ENCODE measurements at regions of chr11 and their contacts with region 1.

Region 1: DNA sequence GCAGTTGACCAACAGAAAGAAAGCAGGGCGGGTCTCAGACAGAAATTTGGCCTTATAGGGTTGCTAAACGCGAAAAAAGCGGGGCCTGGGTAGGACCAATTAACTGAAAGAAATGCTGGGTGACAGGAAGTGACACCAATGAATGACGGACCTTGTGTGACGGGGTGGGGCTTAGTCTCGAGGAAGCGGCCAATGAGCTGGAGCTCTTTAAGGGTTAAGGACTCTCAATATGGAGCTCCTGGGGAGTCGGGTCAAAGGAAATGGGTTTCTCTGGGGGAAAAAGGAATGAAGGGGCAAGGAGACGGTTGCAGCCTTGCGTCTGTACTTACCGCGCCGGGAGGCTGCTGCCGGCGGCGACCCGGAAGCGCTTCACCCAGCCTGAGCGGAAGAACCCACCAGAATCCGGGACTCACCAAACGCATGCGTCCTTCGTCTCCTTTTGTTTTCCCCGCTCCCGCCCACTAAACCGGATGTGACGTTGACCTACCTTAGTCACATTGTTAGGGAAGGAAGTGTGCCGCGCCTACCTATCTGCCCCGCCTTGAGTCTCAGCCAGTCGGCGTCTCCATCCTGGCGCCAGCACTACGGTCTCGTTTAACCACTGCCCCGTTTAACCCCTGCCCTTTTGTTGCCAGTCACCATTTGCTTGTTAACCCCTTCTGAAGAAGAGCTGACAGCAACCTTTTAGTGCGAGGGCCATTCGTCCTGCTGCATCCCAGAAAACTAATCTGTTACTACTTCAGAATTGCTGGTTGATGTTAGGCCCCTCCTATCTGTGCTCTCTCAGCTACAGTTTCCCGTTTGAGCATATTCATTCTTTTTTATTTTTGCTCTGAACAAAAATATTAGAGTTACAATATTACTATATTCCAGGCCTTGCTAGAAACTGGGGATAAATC is at the start of gene ANAPC15:
- DNase-seq: peak; percentile 100
- ATAC-seq: peak; percentile 89
- H3K4me3 Mint-ChIP-seq: peak within 1 kb of the TSS; percentile 92
- H3K27ac Mint-ChIP-seq: peak within 1 kb of the TSS; percentile 98
- H3K4me1 Mint-ChIP-seq: peaks cover 16% of the 10 kb centered on the region
- H3K27me3 Mint-ChIP-seq: no peaks in the 10 kb centered on the region
- total RNA-seq, gene ANAPC15: 60.3 to 76.1 TPM

Region 2: DNA sequence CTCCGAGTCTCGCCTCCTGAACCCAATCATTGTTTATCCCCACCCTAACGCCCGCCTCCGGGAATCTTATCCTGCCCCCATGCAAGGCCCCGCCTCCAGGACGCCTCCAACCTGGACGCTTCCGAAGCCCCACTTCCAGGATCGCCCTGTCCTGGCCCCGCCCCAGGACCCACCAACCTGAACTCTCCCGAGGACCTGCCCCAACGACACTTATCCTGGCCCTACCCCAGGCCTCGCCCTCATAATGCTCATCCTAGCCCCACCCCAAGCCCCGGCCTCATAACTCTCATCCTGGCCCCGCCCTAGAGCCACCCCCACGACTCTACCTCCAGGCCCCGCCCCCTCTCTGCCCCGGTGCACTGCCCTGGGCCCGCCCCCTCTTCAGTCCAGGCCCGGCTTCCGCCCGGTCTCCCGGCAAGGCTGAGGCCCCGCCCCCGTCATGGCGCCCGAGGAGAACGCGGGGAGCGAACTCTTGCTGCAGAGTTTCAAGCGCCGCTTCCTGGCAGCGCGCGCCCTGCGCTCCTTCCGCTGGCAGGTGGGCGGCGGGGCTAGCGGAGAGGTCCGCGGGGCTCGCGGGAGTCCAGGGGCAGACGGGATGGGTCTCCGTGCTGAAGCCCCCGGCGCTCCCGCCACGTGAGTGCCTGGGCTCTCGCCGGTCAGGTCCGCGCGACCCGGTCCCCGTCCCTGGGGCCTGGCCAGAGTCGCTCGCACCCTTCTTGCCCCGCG is 325.3 kb before region 1 on chr11:
- CTCF ChIA-PET with region 1: no interaction called
- POLR2A ChIA-PET with region 1: no interaction called
- intact Hi-C with region 1: loop called in 1 of 2 experiments (anchors 1 kb)
- DNase-seq: peak; percentile 97
- ATAC-seq: peak; percentile 97
- H3K4me3 Mint-ChIP-seq: peak overlapping the region; percentile 84
- H3K27ac Mint-ChIP-seq: peak overlapping the region; percentile 95
- H3K4me1 Mint-ChIP-seq: peaks cover 24% of the 10 kb centered on the region
- H3K27me3 Mint-ChIP-seq: no peaks in the 10 kb centered on the region

Region 3: DNA sequence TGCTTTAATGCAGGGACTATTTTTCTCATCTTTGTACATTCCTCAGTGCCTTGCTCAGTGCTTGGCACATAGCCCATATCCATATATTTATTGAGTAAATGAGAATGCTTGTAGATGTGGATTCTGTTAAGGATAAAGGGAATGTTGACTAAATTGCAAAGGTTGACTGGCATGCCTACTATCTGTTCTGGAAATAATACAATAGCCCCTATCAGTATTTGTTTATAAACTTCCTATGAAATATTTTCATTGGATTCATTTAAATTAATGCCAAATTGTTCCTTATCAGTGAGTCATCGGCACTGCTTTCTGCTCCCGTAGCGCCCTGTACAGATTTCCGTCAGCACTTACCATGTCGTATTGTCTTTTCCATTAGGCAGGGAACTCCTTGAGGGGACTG is 175.7 kb before region 1 on chr11:
- CTCF ChIA-PET with region 1: no interaction called
- POLR2A ChIA-PET with region 1: no interaction called
- intact Hi-C with region 1: no loop called
- DNase-seq: no peak
- ATAC-seq: no peak
- H3K4me3 Mint-ChIP-seq: no peak overlapping the region
- H3K27ac Mint-ChIP-seq: no peak overlapping the region
- H3K4me1 Mint-ChIP-seq: peaks cover 25% of the 10 kb centered on the region
- H3K27me3 Mint-ChIP-seq: no peaks in the 10 kb centered on the region

Region 4: GRCh38 chr11:72024069-72024754 is 88.4 kb before region 1 on chr11:
- CTCF ChIA-PET with region 1: interaction called, 10 read pairs
- POLR2A ChIA-PET with region 1: interaction called, 4 read pairs
- intact Hi-C with region 1: no loop called
- DNase-seq: no peak
- ATAC-seq: no peak
- H3K4me3 Mint-ChIP-seq: no peak overlapping the region
- H3K27ac Mint-ChIP-seq: peak overlapping the region; percentile 60
- H3K4me1 Mint-ChIP-seq: peaks cover 31% of the 10 kb centered on the region
- H3K27me3 Mint-ChIP-seq: no peaks in the 10 kb centered on the region

Region 5: GRCh38 chr11:72040726-72041441 is 71.7 kb before region 1 on chr11:
- CTCF ChIA-PET with region 1: no interaction called
- POLR2A ChIA-PET with region 1: interaction called, 3 read pairs
- intact Hi-C with region 1: loop called in 1 of 2 experiments (anchors 1 kb)
- DNase-seq: peak; percentile 86
- ATAC-seq: peak; percentile 76
- H3K4me3 Mint-ChIP-seq: no peak overlapping the region
- H3K27ac Mint-ChIP-seq: no peak overlapping the region
- H3K4me1 Mint-ChIP-seq: peaks cover 35% of the 10 kb centered on the region
- H3K27me3 Mint-ChIP-seq: no peaks in the 10 kb centered on the region

Region 6: GRCh38 chr11:72642043-72642883 is 529.7 kb after region 1 on chr11:
- CTCF ChIA-PET with region 1: no interaction called
- POLR2A ChIA-PET with region 1: no interaction called
- intact Hi-C with region 1: no loop called
- DNase-seq: peak; percentile 28
- ATAC-seq: peak; percentile 28
- H3K4me3 Mint-ChIP-seq: peak overlapping the region; percentile 34
- H3K27ac Mint-ChIP-seq: no peak overlapping the region
- H3K4me1 Mint-ChIP-seq: no peaks in the 10 kb centered on the region
- H3K27me3 Mint-ChIP-seq: peaks cover 4% of the 10 kb centered on the region

Region 7: GRCh38 chr11:73141848-73142286 is 1029.3 kb after region 1 on chr11:
- CTCF ChIA-PET with region 1: no interaction called
- POLR2A ChIA-PET with region 1: no interaction called
- intact Hi-C with region 1: loop called in 1 of 2 experiments (anchors 10 kb)
- DNase-seq: peak; percentile 73
- ATAC-seq: peak; percentile 17
- H3K4me3 Mint-ChIP-seq: peak overlapping the region; percentile 92
- H3K27ac Mint-ChIP-seq: peak overlapping the region; percentile 82
- H3K4me1 Mint-ChIP-seq: peaks cover 40% of the 10 kb centered on the region
- H3K27me3 Mint-ChIP-seq: no peaks in the 10 kb centered on the region